ENCODE measurements at regions of chr16 and their contacts with region 1.

Region 1: DNA sequence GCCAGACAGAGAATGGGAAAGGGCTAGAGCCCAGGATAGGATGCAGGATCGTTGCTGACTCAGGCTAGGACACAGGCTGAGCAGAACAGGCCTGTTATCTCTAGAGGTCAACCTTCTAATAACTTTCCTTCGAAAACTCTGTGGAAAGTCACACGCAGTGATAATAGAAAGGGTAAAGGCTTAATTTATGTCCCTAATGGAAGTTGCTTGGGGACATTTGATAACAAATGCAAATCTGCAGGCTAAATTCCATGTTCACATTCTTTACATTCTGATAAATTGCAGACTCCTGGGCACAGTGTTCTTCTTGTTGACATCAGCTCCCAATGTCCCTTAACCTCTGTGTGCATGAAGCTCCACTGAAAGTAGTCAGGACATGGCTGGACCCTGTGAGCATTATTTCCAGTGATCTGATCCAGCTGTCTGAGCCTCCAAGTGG is 15.1 kb upstream of the BCO1 start:
- DNase-seq: no peak
- ATAC-seq: peak in 6 of 8 donors; percentile 86 to 96 (median 94)
- H3K4me3 ChIP-seq: no peak overlapping the region
- H3K27ac ChIP-seq: peak overlapping the region in 4 of 10 donors; percentile 28 to 50 (median 37)
- H3K4me1 ChIP-seq: peaks cover 0 to 12% (median 0%) of the 10 kb centered on the region in 9 donors
- H3K27me3 ChIP-seq: no peaks in the 10 kb centered on the region
- CTCF ChIP-seq: no peak

Region 2: DNA sequence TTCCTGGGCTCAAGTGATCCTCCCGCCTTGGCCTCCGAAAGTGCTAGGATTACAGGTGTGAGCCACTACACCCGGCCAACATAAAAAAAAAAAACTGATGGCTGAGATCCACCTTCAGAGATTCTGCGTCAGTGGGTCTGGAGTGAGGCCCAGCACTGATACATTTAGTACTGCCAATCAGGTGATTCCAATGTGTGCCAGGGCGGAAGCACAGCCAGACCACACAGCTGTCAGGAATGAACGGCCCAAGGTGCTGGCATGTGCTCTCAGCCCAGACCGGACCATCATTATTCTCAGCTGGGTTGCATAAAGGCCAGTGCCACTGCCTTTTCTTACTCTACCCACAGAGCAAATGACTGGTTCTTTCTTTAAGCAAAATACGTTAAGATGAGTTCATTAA is 13.9 kb after region 1 on chr16:
- intact Hi-C with region 1: loop called in 1 of 10 experiments (anchors 1 kb)
- DNase-seq: peak; percentile 66 to 78
- ATAC-seq: peak; percentile 89 to 100 (median 98)
- H3K4me3 ChIP-seq: no peak overlapping the region
- H3K27ac ChIP-seq: peak overlapping the region in 9 of 10 donors; percentile 27 to 76 (median 55)
- H3K4me1 ChIP-seq: peaks cover 0 to 17% (median 9%) of the 10 kb centered on the region in 9 donors
- H3K27me3 ChIP-seq: no peaks in the 10 kb centered on the region
- CTCF ChIP-seq: no peak

Region 3: GRCh38 chr16:81327521-81328095 is 104.2 kb after region 1 on chr16:
- intact Hi-C with region 1: no loop called
- DNase-seq: no peak
- ATAC-seq: no peak
- H3K4me3 ChIP-seq: no peak overlapping the region
- H3K27ac ChIP-seq: no peak overlapping the region
- H3K4me1 ChIP-seq: peaks cover 0 to 9% (median 0%) of the 10 kb centered on the region in 9 donors
- H3K27me3 ChIP-seq: no peaks in the 10 kb centered on the region
- CTCF ChIP-seq: no peak

Measured in heart right ventricle (tissue), 16 donors.